ENCODE measurements at regions of chr13 and their contacts with region 1.

Region 1: GRCh38 chr13:24220086-24220703 is 59.7 kb downstream of the SPATA13 start:
- DNase-seq: peak; percentile 80 to 90 (median 86)
- H3K4me3 ChIP-seq: no peak overlapping the region
- H3K27ac ChIP-seq: no peak overlapping the region
- H3K4me1 ChIP-seq: peaks cover 0 to 22% (median 6%) of the 10 kb centered on the region in 4 experiments
- H3K27me3 ChIP-seq: no peaks in the 10 kb centered on the region

Region 2: GRCh38 chr13:24053519-24054251 is 166.5 kb before region 1 on chr13:
- CTCF ChIA-PET with region 1: interaction called, 45 read pairs
- POLR2A ChIA-PET with region 1: no interaction called
- DNase-seq: peak; percentile 64 to 81 (median 78)
- H3K4me3 ChIP-seq: no peak overlapping the region
- H3K27ac ChIP-seq: no peak overlapping the region
- H3K4me1 ChIP-seq: peaks cover 0 to 16% (median 1%) of the 10 kb centered on the region in 4 experiments
- H3K27me3 ChIP-seq: no peaks in the 10 kb centered on the region

Region 3: DNA sequence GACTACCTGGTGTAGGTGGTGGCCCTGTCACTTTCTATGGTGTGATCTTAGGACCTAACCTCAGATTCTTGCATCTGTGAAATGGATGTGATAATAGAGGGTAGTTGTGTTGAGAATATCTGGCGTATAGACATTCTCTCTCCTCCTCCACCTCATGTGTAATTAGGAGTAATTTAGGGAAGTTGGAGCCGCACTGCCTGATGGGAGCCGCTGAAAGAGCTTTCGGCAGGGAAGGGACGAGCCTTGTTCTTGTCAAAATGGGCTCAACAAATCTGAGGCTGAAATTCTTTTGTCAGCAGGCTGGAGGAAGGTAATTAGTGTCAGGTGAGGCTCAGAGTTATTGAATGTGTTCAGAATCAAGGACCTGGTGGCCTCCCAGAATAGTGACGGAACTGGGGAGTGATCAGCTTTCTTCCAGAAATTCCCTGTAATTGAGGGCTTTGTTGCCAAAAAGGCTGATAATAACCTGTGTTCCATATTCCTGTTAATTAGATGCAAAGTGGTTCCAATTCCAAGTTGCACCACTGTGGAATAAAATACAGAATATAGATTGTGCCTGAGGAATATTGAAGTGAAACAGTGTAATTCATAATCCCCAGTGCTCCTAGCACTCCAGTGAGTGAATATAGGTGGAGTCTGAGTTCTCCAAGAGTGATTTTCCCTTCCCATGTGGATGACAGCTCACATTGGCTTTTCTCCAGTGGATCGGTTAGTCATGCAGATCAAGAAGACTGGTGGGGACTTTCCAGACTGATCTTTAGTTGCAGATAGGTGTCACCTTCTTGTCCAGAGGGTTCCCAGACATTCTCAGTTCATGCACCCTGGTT is 12.1 kb before region 1 on chr13:
- CTCF ChIA-PET with region 1: interaction called, 17 read pairs
- POLR2A ChIA-PET with region 1: no interaction called
- DNase-seq: peak in 1 of 3 donors; percentile 31
- H3K4me3 ChIP-seq: peak overlapping the region in 2 of 7 experiments; percentile 2 to 17
- H3K27ac ChIP-seq: no peak overlapping the region
- H3K4me1 ChIP-seq: peaks cover 18 to 32% (median 25%) of the 10 kb centered on the region in 4 experiments
- H3K27me3 ChIP-seq: no peaks in the 10 kb centered on the region

Region 4: GRCh38 chr13:24243302-24243701 is 23.1 kb after region 1 on chr13:
- CTCF ChIA-PET with region 1: no interaction called
- POLR2A ChIA-PET with region 1: no interaction called
- DNase-seq: peak in 1 of 3 donors; percentile 18
- H3K4me3 ChIP-seq: no peak overlapping the region
- H3K27ac ChIP-seq: no peak overlapping the region
- H3K4me1 ChIP-seq: peaks cover 0 to 8% (median 3%) of the 10 kb centered on the region in 4 experiments
- H3K27me3 ChIP-seq: no peaks in the 10 kb centered on the region